Right ventricle myocardium inferior (tissue), 1 donor: ENCODE measurements at regions of chr3 and their contacts with region 1.

Region 1: GRCh38 chr3:24237971-24238767 is 256.5 kb downstream of the THRB start:
- DNase-seq: no peak
- ATAC-seq: peak; percentile 85

Region 2: DNA sequence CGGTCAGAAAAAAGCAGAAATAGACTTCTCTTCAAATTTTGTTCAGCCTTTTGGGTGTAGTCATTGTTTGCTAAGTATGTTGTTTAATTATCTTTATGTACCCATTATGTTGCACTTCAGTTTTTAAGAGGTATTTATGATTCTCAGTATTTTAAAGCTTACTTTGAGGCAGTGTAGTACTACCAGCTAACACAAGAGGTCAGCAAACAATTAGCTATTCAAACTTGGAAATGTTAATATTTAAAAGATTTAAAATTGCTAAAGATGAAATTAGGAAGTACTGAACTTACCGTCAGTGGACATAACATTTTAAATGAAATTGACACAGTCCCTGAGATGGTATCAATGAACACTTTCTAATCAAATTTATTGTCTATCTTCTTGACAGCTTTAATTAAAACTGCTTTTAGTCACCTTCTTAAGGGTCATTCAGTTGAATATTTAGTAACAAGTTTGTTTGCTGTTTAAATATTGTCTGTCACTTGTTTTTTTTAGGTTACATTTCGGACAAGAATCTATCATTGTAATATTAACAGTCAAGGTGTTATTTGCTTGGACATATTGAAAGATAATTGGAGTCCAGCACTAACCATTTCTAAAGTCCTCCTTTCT is 349.4 kb before region 1 on chr3:
- intact Hi-C with region 1: loop called (anchors 5 kb)
- DNase-seq: no peak
- ATAC-seq: peak; percentile 27

Region 3: GRCh38 chr3:23904545-23904944 is 333.6 kb before region 1 on chr3:
- intact Hi-C with region 1: no loop called
- DNase-seq: no peak
- ATAC-seq: no peak

Region 4: GRCh38 chr3:24004171-24004938 is 233.8 kb before region 1 on chr3:
- intact Hi-C with region 1: loop called (anchors 5 kb)
- DNase-seq: no peak
- ATAC-seq: no peak

Region 5: DNA sequence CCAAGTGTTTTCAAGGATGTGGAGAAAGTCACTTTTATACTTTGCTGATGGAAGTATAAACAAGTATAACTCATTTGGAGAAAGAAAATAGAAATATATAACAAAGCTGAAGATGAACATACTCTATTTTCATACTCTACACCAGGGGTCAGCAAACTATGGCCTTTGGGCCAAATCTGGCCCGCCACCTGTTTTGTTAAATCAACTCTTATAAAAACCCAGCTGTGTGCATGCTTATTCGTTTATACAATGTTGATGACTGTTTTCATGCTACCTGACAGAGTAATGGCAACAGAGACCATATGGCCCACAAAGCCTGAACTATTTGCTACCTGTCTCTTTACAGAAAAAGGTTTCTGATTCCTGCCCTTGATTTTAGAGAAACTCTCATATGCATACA is 169.1 kb before region 1 on chr3:
- intact Hi-C with region 1: loop called (anchors 5 kb)
- DNase-seq: no peak
- ATAC-seq: no peak

Region 6: DNA sequence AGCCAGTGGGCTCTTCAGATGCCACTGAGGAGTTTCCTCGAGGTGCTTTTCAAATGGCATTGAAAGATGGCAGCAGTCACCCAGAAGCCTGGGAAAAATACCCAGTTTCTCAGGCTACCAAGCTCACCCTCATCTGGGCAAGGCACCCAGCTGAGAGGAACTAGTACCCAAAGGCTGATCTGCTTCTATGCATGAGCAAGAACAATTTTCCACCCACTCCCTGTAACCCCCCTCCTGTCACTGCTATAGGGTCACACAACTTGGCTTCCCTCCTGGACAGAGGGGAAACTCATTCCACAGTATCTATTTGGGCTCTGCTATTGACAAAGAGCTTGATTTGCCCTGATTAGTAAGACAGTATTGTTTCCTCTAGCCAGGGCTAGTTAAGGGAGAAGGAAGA is 224.6 kb after region 1 on chr3:
- intact Hi-C with region 1: no loop called
- DNase-seq: no peak
- ATAC-seq: no peak